ENCODE measurements at regions of chr20 and their contacts with region 1.

Region 1: DNA sequence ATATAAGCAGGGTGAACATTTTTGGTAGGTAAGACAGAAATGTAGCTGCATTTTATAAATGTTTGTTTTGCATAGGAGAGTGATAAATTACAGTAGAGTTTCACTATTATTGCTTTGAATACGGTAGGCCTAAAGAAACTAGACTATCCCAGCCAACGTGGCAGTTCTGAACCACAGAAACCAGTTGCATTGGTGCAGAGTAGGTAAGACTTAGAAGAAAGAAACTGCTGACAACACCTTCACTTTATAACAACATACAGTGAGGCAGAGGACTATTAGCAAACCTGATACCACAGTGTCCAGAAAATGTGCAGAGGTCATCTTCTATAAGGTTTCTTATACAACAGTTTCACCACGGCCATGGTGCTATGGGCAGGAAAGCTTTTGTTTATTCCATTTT is 566.1 kb downstream of the KIF16B start:
- DNase-seq: no peak
- ATAC-seq: no peak

Region 2: GRCh38 chr20:16125816-16126215 is 118.7 kb after region 1 on chr20:
- intact Hi-C with region 1: loop called (anchors 10 kb)
- DNase-seq: no peak
- ATAC-seq: peak; percentile 91

Measured in Right ventricle myocardium inferior (tissue), 1 donor.